ENCODE measurements at regions of chr9 and their contacts with region 1.

Region 1: DNA sequence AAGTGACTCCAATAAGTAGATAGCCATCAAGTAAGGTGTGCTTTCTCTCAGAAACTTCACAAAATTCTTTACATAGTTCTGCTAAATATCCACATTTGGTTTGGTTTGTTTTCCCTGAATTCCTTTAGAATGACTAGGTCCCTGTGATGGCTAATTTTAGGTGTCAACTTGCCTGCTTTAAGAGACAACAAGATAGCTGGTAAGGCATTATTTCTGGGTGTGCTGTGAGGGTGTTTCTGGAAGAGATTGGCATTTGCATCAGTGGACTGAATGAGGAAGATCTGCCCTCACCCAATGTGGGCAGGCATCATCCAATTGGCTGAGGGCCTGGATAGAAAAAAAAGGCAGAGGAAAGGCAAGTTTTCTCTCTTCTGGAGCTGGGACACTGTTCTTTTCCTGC is 8.3 kb upstream of the PTBP3 start:
- DNase-seq: no peak
- H3K4me3 ChIP-seq: no peak overlapping the region
- H3K4me3 Mint-ChIP-seq: no peak overlapping the region
- H3K27ac ChIP-seq: no peak overlapping the region
- H3K27ac Mint-ChIP-seq: no peak overlapping the region
- H3K4me1 ChIP-seq: no peaks in the 10 kb centered on the region
- H3K4me1 Mint-ChIP-seq: no peaks in the 10 kb centered on the region
- H3K27me3 ChIP-seq: no peaks in the 10 kb centered on the region
- H3K27me3 Mint-ChIP-seq: peaks cover 0 to 4% of the 10 kb centered on the region in 2 donors

Region 2: DNA sequence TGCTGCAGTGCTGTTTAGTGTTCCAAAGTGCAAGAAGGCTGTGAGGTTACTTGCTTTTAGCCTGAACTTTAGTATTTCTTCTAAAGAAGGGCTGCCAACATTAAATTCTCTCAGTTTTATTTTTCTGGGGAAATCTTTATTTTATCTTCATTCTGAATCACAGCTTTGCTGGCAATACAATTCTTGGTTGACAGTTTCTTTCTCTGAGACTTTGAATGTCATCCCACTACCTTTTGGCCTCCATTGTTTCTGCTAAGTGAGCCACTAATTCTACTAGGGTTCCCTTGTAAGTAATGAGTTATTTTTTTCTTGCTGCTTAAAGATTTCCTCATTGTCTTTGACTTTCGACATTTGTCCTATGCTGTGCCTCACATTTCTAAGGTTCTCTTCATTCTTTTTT is 134.3 kb before region 1 on chr9:
- CTCF ChIA-PET with region 1: no interaction called
- POLR2A ChIA-PET with region 1: interaction called, 11 read pairs
- DNase-seq: no peak
- H3K4me3 ChIP-seq: no peak overlapping the region
- H3K4me3 Mint-ChIP-seq: no peak overlapping the region
- H3K27ac ChIP-seq: no peak overlapping the region
- H3K27ac Mint-ChIP-seq: no peak overlapping the region
- H3K4me1 ChIP-seq: no peaks in the 10 kb centered on the region
- H3K4me1 Mint-ChIP-seq: no peaks in the 10 kb centered on the region
- H3K27me3 ChIP-seq: no peaks in the 10 kb centered on the region
- H3K27me3 Mint-ChIP-seq: no peaks in the 10 kb centered on the region

Region 3: DNA sequence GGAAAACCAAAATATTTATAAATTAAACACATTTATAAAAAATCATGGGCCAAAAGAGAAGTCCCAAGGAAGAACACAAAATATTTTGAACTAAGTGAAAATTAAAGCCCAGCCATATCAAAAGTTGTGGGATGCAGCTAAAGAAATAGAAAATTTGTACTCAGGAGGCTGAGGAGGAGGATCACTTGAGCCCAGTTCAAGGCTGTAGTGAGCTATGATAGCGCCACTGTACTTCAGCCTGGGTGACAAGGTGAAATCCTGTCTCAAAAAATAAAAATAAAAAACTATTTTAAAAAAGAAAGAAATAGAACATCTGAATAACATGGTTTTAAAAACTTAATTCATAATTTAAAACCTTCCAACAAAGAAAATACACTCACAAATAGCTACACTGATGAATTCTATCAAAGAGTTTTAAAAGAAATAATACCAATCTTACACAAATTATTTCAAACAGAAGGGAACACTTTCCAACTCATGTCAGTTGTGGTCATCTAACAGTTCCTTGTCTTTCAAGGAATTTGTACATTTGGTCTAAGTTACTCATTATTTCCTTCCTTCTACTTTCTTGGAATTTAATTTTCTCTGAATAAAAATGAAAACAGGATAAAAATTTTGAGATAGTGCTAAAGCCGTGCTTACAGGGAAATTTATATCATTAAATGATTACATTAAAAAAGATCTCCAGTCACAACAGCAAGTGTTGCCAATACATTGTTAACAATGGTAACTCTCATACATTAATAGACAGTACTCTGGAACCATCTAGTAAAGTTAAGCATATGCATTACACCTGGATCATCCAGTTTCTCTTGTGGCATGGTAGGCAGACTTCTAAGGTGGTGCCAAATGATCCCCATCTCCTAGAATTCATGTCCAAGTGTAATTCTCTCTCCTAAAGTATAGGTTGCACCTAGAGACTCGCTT is 26.1 kb before region 1 on chr9:
- CTCF ChIA-PET with region 1: no interaction called
- POLR2A ChIA-PET with region 1: no interaction called
- DNase-seq: no peak
- H3K4me3 ChIP-seq: no peak overlapping the region
- H3K4me3 Mint-ChIP-seq: peak overlapping the region; percentile 8 to 78 (median 65)
- H3K27ac ChIP-seq: peak overlapping the region; percentile 38
- H3K27ac Mint-ChIP-seq: peak overlapping the region in 6 of 8 donors; percentile 56 to 83 (median 71)
- H3K4me1 ChIP-seq: peaks cover 34% of the 10 kb centered on the region
- H3K4me1 Mint-ChIP-seq: peaks cover 63 to 95% (median 86%) of the 10 kb centered on the region in 3 donors
- H3K27me3 ChIP-seq: no peaks in the 10 kb centered on the region
- H3K27me3 Mint-ChIP-seq: peaks cover 0 to 1% of the 10 kb centered on the region in 2 donors